ENCODE measurements at regions of chr15 and their contacts with region 1.

Region 1: GRCh38 chr15:74776821-74777768 is 4.8 kb upstream of the CSK start:
- ATAC-seq: peak in 4 of 8 experiments; percentile 6 to 81 (median 70)
- H3K4me3 ChIP-seq: no peak overlapping the region
- H3K27ac ChIP-seq: peak overlapping the region; percentile 14 to 68
- H3K4me1 ChIP-seq: peaks cover 27 to 41% of the 10 kb centered on the region in 2 donors

Region 2: GRCh38 chr15:74948795-74949194 is 171.7 kb after region 1 on chr15:
- in situ Hi-C with region 1: loop called in 4 of 9 experiments (anchors 10 to 25 kb)
- ATAC-seq: no peak
- H3K4me3 ChIP-seq: no peak overlapping the region
- H3K27ac ChIP-seq: no peak overlapping the region
- H3K4me1 ChIP-seq: peaks cover 0 to 3% of the 10 kb centered on the region in 2 donors

Region 3: GRCh38 chr15:74956648-74957300 is 179.7 kb after region 1 on chr15 and contains the start of gene RPP25:
- in situ Hi-C with region 1: loop called in 1 of 9 experiments (anchors 10 kb)
- ATAC-seq: peak; percentile 76 to 83 (median 78)
- H3K4me3 ChIP-seq: peak within 1 kb of the TSS; percentile 36 to 58 (median 39)
- H3K27ac ChIP-seq: peak within 1 kb of the TSS; percentile 51 to 81
- H3K4me1 ChIP-seq: peaks cover 22 to 41% of the 10 kb centered on the region in 2 donors
- total RNA-seq, gene RPP25: 3.2 to 13.9 (median 9.5) TPM

Region 4: DNA sequence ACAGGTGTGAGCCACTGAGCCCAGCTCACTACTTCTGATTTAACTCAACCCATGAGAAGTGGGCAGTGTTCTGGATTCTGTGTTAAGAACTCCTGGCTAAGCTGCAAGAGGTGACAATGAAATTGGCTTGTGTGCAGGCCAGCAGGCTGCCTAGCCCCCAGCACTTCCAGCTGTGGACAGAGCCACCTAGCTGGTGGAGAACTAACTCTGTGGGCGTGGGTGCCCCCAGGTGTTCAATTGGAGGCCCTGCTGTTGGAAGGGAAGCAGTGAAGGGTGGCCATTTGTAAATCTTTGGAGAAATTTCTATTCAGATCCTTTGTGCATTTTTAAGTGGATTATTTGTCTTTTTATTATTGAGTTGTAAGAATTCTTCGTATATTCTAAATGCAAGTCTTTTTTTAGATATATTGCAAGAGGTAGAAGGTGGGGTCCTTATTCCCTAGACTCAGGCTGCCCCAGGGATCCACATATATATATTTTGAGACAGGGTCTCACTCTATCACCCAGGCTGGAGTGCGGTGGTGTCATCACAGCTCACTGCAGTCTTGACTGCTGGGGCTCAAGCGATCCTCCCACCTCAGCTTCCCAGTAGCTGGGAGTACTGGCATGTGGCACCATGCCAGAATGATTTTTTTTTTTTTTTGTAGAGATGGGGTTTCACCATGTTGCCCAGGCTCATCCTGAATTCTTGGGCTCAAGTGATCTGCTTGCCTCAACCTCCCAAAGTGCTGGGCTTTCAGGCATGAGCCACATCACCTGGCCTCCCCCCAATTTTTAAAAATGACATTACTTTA is 211.1 kb after region 1 on chr15:
- in situ Hi-C with region 1: no loop called
- ATAC-seq: peak; percentile 67 to 93 (median 84)
- H3K4me3 ChIP-seq: no peak overlapping the region
- H3K27ac ChIP-seq: no peak overlapping the region
- H3K4me1 ChIP-seq: peaks cover 0 to 7% of the 10 kb centered on the region in 2 donors